Activated CD4-positive, alpha-beta T cell treated with anti-CD3 and anti-CD28 coated beads, Interleukin-2, amount 10 ng/mL, durations not matched to agents 24 days and 14 days (primary cell): ENCODE measurements at regions of chr4 and their contacts with region 1.

Region 1: DNA sequence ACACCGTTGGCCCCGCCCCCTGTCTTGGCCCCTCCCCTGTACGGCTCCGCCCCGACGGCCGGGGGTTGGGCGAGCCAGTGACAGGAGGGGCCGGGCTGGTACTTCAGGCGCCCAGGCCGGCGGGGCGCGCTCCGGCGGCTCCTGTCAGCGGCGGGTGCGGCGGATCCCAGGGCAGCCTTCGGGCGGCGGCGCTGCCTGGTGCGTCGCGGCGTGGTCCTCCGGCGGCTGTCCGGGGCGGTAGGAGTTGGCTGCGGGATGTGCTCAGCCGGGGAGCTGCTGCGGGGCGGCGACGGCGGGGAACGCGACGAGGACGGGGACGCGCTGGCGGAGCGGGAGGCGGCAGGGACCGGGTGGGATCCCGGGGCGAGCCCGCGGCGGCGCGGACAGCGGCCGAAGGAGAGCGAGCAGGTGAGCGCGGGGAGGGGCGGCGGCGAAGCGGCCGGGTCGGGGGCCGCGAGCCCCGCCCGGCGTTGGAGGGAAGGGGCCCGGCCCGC is at the start of gene FAM241A:
- DNase-seq: peak; percentile 96
- H3K4me3 Mint-ChIP-seq: peak within 1 kb of the TSS; percentile 89
- H3K27ac Mint-ChIP-seq: peak within 1 kb of the TSS; percentile 95
- H3K4me1 Mint-ChIP-seq: peaks cover 45% of the 10 kb centered on the region
- H3K27me3 Mint-ChIP-seq: no peaks in the 10 kb centered on the region
- total RNA-seq, gene FAM241A: 6.2 and 6.7 TPM in 2 replicates

Region 2: GRCh38 chr4:112119353-112119783 is 26.0 kb before region 1 on chr4:
- intact Hi-C with region 1: loop called (anchors 1 kb)
- DNase-seq: peak; percentile 76
- H3K4me3 Mint-ChIP-seq: peak overlapping the region; percentile 58
- H3K27ac Mint-ChIP-seq: peak overlapping the region; percentile 97
- H3K4me1 Mint-ChIP-seq: peaks cover 21% of the 10 kb centered on the region
- H3K27me3 Mint-ChIP-seq: peaks cover 6% of the 10 kb centered on the region

Region 3: GRCh38 chr4:112183252-112183651 is 37.9 kb after region 1 on chr4:
- intact Hi-C with region 1: loop called (anchors 5 kb)
- DNase-seq: no peak
- H3K4me3 Mint-ChIP-seq: no peak overlapping the region
- H3K27ac Mint-ChIP-seq: peak overlapping the region; percentile 43
- H3K4me1 Mint-ChIP-seq: peaks cover 24% of the 10 kb centered on the region
- H3K27me3 Mint-ChIP-seq: no peaks in the 10 kb centered on the region

Region 4: GRCh38 chr4:112284662-112285411 is 139.5 kb after region 1 on chr4:
- intact Hi-C with region 1: loop called (anchors 1 kb)
- DNase-seq: peak; percentile 74
- H3K4me3 Mint-ChIP-seq: peak overlapping the region; percentile 95
- H3K27ac Mint-ChIP-seq: peak overlapping the region; percentile 94
- H3K4me1 Mint-ChIP-seq: peaks cover 77% of the 10 kb centered on the region
- H3K27me3 Mint-ChIP-seq: no peaks in the 10 kb centered on the region